PC-3 (cell line): ENCODE measurements at regions of chr3 and their contacts with region 1.

Region 1: DNA sequence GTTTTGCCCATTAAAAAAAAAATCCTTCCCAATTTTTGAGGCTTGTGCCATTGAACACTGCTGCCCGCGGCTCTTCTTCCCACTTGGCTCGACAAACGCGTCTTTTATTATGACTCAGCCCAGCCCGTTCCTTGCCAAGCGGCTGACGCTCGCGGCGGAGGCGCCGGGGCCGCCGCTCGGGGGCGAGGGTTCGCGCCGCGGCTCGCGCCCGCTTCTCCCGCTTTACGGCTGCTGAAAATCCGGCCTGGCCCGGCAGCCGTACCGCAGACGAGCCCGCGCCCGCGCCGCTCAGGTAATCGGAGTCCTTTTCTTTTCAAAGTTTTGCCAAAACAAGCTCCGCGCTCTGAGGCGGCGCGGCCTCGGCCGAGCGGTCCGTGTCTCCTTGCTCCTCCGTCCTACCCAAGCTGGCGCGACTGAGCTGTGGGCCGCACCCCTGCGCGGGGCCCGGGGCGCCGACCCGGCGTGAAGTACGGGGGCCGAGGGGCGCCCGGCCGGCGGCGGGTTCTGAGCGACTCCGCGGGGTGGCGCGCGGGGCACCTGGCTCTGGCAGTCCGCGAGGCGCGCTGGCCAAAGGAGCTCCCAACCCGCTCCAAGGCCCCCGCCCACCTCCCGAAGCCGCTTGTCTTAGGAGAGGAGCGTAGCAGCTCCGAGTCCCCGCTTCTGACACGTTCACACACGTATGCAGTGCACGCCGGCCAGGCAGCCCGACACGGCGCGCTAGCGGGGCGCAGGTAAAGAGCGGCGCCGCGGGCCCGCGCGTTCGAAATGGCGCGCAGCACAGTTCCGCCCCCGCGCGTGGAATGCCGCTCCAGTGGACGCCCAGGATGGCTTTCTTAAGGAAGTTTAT is 418.2 kb upstream of the NAALADL2 start:
- DNase-seq: peak; percentile 95
- ATAC-seq: peak; percentile 66
- H3K4me3 ChIP-seq: peak overlapping the region; percentile 77
- H3K27ac ChIP-seq: peak overlapping the region; percentile 95
- H3K4me1 ChIP-seq: peaks cover 34% of the 10 kb centered on the region
- H3K27me3 ChIP-seq: no peaks in the 10 kb centered on the region
- CTCF ChIP-seq: no peak; the same call in 1 of the 2 replicates

Region 2: DNA sequence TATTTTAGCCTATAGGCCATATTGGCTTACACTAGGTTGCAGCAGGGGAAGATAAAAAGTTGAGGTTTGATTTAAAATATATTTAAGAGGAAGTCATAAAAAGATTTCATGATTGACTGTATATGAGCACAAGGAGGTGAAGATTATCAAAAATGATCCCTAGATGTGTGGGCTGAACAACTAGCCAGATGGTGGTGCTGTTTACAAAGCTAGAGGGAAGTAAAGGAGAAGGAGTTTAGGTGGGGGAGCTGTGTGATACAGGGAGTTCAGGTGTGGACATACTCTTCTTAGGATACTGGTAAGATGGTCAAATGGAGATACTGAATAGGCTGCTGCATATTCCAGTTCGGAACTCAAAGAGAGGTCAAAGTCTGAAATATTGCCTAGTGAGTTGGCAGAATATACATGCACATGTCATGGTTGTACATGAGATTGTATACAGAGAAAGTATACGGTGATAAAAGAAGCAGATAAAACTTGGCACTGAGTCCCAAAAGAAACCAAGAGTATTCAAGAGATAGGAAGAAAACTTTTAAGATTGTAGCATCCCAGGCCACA is 315.6 kb before region 1 on chr3:
- CTCF ChIA-PET with region 1: no interaction called
- POLR2A ChIA-PET with region 1: no interaction called
- intact Hi-C with region 1: loop called (anchors 2 kb)
- DNase-seq: peak; percentile 71
- ATAC-seq: peak; percentile 82
- H3K4me3 ChIP-seq: no peak overlapping the region
- H3K27ac ChIP-seq: no peak overlapping the region
- H3K4me1 ChIP-seq: peaks cover 18% of the 10 kb centered on the region
- H3K27me3 ChIP-seq: no peaks in the 10 kb centered on the region
- CTCF ChIP-seq: peak; percentile 94

Region 3: DNA sequence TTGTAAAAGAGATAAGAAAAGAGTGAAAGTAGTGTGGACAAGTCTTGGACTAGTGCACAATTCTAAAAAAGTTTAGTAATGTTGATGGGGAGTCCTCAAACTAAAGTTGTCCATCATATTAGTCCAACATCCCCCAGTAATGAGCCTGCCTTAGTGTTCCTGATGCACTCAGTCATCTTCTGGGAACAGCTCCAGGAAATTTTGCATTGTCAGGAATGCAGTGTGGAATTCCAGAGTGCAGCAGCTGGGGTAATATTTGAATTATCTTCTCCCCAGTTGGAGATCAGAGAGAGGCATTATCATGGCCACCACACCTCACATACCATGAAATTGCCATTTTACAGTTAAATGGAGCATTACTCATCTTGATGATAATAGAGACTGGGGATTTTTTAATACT is 110.7 kb before region 1 on chr3:
- CTCF ChIA-PET with region 1: no interaction called
- POLR2A ChIA-PET with region 1: no interaction called
- intact Hi-C with region 1: loop called (anchors 5 kb)
- DNase-seq: peak; percentile 91
- ATAC-seq: peak; percentile 49
- H3K4me3 ChIP-seq: no peak overlapping the region
- H3K27ac ChIP-seq: no peak overlapping the region
- H3K4me1 ChIP-seq: peaks cover 44% of the 10 kb centered on the region
- H3K27me3 ChIP-seq: no peaks in the 10 kb centered on the region
- CTCF ChIP-seq: no peak

Region 4: DNA sequence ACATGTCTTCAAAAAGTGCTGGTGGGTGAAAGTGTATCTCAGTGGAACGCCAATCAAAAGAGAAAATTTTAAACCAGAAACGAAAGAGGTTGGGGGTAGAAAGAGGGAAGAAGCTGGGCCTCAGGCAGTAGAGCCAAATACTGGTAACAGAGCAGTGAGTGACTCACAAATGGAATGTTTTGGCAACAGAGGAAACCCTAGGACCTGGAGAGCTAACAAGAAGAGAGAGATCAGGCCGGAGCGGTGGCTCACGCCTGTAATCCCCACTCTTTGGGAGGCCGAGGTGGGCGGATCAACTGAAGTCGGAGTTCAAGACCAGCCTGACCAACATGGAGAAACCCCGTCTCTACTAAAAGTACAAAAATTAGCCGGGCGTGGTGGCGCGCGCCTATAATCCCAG is 32.7 kb before region 1 on chr3:
- CTCF ChIA-PET with region 1: interaction called, 3 read pairs
- POLR2A ChIA-PET with region 1: no interaction called
- intact Hi-C with region 1: loop called (anchors 1 kb)
- DNase-seq: peak; percentile 77
- ATAC-seq: peak; percentile 87
- H3K4me3 ChIP-seq: no peak overlapping the region
- H3K27ac ChIP-seq: no peak overlapping the region
- H3K4me1 ChIP-seq: peaks cover 25% of the 10 kb centered on the region
- H3K27me3 ChIP-seq: no peaks in the 10 kb centered on the region
- CTCF ChIP-seq: no peak

Region 5: DNA sequence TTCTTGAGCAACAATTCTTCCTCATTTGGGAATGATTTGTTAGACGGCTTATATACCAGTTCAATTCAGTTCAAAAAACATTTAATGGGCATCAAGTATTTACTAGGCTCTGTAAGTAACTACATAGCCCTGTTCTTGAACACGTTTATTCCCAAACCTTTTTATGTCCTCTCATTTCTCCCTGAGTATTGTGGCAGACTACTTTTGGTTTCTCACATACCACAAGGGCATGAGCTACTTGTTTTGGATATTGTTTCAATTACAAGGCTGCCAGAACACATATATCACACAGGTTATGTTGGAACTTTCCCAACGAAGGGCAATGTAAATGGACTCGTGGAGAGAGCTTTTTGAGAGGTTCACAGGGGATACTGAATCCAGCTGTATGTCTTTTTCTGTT is 54.3 kb after region 1 on chr3:
- CTCF ChIA-PET with region 1: no interaction called
- POLR2A ChIA-PET with region 1: no interaction called
- intact Hi-C with region 1: no loop called
- DNase-seq: no peak
- ATAC-seq: no peak
- H3K4me3 ChIP-seq: no peak overlapping the region
- H3K27ac ChIP-seq: no peak overlapping the region
- H3K4me1 ChIP-seq: no peaks in the 10 kb centered on the region
- H3K27me3 ChIP-seq: no peaks in the 10 kb centered on the region
- CTCF ChIP-seq: no peak

Region 6: GRCh38 chr3:174614036-174614435 is 173.1 kb after region 1 on chr3:
- CTCF ChIA-PET with region 1: no interaction called
- POLR2A ChIA-PET with region 1: no interaction called
- intact Hi-C with region 1: loop called (anchors 10 kb)
- DNase-seq: no peak
- ATAC-seq: no peak
- H3K4me3 ChIP-seq: no peak overlapping the region
- H3K27ac ChIP-seq: no peak overlapping the region
- H3K4me1 ChIP-seq: no peaks in the 10 kb centered on the region
- H3K27me3 ChIP-seq: no peaks in the 10 kb centered on the region
- CTCF ChIP-seq: no peak

Region 7: DNA sequence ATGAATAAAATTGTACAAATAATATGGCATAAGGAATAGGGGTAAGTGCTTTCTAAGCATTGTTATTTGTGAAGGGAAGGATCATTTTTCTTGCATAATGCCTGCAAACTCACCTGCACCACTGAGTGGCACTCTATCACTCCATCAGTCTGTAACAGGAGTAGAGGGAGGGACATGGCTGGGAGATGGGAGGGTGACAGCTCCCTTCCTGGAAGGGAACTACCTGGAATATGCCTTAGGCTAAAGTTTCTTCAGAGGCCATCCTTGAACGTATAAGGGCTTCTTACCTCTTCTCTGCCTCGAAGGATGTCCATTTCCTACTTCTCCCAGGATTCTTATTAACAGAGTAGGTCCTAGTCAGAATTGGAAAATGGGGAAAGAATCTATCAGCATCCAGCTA is 421.2 kb after region 1 on chr3:
- CTCF ChIA-PET with region 1: no interaction called
- POLR2A ChIA-PET with region 1: no interaction called
- intact Hi-C with region 1: loop called (anchors 5 kb)
- DNase-seq: peak; percentile 85
- ATAC-seq: peak; percentile 69
- H3K4me3 ChIP-seq: no peak overlapping the region
- H3K27ac ChIP-seq: peak overlapping the region; percentile 59; the same call in 1 of the 2 replicates
- H3K4me1 ChIP-seq: peaks cover 50% of the 10 kb centered on the region
- H3K27me3 ChIP-seq: no peaks in the 10 kb centered on the region
- CTCF ChIP-seq: peak; percentile 87